Mammary epithelial cell (primary cell): ENCODE measurements at regions of chr1 and their contacts with region 1.

Region 1: DNA sequence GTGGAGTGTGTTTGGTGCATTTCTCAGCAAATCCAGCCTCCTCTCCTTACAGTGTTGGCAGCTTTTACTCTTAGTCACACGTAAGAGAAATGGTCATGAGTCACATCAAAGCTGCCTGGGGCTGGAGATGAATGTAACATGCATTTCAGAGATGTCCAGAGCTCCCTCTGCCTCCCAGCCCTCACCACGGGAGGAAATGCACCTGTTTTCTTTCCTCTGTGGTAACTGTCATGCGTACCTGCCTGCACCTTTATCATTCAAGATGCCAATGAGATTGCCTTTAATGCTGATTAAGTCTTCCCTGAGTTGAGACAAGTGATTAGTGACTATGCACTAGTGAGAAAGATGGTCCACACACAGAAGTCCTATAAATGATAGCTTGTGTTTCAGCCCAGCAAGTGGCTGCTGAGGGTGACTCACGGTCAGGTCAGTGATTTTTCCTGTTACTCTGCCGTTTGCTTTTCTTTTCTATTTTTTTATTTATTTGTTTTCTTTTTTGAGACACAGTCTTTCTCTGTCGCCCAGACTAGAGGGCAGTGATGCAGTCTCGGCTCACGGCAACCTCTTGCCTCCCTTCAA is 277.3 kb upstream of the FMN2 start:
- DNase-seq: peak; percentile 77
- H3K4me3 ChIP-seq: no peak overlapping the region
- H3K27ac ChIP-seq: no peak overlapping the region
- H3K4me1 ChIP-seq: no peaks in the 10 kb centered on the region
- H3K27me3 ChIP-seq: no peaks in the 10 kb centered on the region
- CTCF ChIP-seq: peak in 1 of 2 donors; percentile 24

Region 2: DNA sequence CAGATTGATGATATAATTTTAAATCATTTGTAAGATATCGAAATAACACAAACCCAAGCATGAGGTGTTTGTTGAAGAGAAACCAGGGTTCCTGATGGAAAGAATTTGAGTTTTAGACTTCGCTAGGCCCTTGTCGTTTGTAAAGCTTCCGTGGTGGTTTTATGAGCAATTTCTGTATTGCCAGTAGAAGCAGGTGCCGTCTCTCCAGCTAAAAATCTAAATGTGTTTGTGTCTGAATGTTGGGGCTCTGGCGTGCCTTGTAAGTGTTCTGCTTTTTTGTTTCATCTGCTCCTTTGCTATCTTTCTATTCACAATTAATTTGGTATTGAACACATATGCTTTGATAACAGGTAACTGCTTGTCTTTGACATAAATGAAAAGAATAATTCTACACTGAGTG is 400.5 kb before region 1 on chr1:
- CTCF ChIA-PET with region 1: no interaction called
- dilution Hi-C with region 1: no loop called
- in situ Hi-C with region 1: no loop called
- intact Hi-C with region 1: loop called (anchors 10 kb)
- DNase-seq: no peak
- H3K4me3 ChIP-seq: no peak overlapping the region
- H3K27ac ChIP-seq: no peak overlapping the region
- H3K4me1 ChIP-seq: no peaks in the 10 kb centered on the region
- H3K27me3 ChIP-seq: no peaks in the 10 kb centered on the region
- CTCF ChIP-seq: no peak

Region 3: DNA sequence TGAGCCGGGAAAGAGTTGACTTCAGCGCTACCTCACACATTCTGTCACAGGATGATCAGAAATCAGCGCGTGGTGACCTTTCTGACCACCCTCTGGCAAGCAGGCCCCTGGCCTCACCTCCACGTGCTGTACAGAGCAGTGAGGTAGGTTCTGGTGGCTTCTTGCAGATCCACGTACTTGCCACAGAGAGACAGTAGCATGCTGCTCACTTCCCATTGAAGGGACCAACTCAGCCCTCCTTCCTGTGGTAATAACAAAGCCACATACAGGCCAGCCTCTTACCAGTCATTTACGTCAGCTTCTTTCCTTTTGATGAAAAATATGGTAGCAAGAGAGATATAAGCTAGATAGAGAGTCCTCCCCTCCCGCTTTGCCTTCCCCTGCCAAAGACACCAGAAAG is 227.3 kb before region 1 on chr1:
- CTCF ChIA-PET with region 1: no interaction called
- dilution Hi-C with region 1: no loop called
- in situ Hi-C with region 1: no loop called
- intact Hi-C with region 1: no loop called
- DNase-seq: no peak
- H3K4me3 ChIP-seq: no peak overlapping the region
- H3K27ac ChIP-seq: no peak overlapping the region
- H3K4me1 ChIP-seq: no peaks in the 10 kb centered on the region
- H3K27me3 ChIP-seq: no peaks in the 10 kb centered on the region
- CTCF ChIP-seq: no peak

Region 4: DNA sequence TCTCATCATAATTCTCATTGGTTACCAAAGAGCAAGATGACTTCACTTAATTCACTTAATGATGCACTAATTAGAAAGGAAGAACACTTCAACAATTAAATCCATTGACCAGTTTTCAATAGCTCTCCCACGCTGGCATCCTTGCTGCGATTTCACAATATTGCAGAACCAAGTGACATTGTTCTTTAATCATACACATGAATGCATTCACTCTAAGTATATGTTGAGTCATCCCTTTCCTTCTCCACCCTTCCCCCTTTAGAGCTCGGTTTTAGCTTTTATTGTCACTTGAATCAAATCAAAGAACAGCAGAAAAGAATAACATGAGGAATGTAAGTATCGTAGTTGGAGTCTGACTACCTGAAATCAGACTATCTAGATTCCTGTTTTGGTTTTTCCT is 43.7 kb after region 1 on chr1:
- CTCF ChIA-PET with region 1: no interaction called
- dilution Hi-C with region 1: no loop called
- in situ Hi-C with region 1: no loop called
- intact Hi-C with region 1: loop called (anchors 5 kb)
- DNase-seq: peak; percentile 3
- H3K4me3 ChIP-seq: no peak overlapping the region
- H3K27ac ChIP-seq: no peak overlapping the region
- H3K4me1 ChIP-seq: no peaks in the 10 kb centered on the region
- H3K27me3 ChIP-seq: no peaks in the 10 kb centered on the region
- CTCF ChIP-seq: no peak

Region 5: DNA sequence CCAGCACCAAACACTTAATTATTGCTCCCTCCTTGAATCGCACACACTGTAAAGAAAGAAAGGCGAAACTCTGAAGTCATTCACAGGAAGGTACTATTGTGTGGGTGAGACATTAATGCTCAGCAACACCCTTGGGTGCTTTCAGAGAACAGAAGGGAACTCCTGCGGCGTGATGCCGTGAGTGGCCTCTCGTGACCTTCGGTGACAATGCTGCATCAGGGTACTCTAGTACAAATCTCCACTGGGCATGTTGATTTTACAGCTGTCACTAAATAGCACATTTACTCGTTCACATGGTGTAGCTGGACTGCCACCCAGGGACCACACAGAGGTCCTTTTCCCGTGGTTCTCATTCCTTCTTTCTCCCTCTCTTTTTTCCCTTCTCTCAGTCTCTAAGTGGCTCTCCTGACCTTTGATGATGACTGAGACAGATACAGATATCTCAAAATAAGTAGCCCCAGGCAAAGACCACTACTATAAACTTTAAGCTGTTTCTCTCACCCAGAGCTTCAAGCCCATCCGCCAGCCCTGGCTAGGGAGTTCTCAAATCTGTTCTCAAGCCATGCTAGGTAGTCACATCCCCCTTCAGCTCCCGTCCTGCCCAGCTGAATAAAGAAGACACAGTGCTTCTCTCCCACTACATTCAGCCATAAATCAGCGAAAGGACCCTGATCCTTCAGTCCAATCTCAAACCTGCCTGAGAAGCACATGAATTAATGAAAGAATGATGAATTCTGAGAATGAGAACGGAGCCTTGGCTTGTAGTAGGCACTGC is 53.9 kb after region 1 on chr1:
- CTCF ChIA-PET with region 1: no interaction called
- dilution Hi-C with region 1: loop called (anchors 5 kb)
- in situ Hi-C with region 1: no loop called
- intact Hi-C with region 1: no loop called
- DNase-seq: no peak
- H3K4me3 ChIP-seq: no peak overlapping the region
- H3K27ac ChIP-seq: no peak overlapping the region
- H3K4me1 ChIP-seq: no peaks in the 10 kb centered on the region
- H3K27me3 ChIP-seq: no peaks in the 10 kb centered on the region
- CTCF ChIP-seq: no peak